SK-N-SH (cell line): ENCODE measurements at regions of chr2 and their contacts with region 1.

Region 1: GRCh38 chr2:11688222-11689069 is 18.5 kb upstream of the NTSR2 start:
- DNase-seq: peak; percentile 94
- H3K4me3 ChIP-seq: peak overlapping the region; percentile 27 to 48
- H3K27ac ChIP-seq: no peak overlapping the region
- H3K4me1 ChIP-seq: peaks cover 0 to 12% of the 10 kb centered on the region in 2 experiments; a peak in 2 of 4 replicates
- H3K27me3 ChIP-seq: peaks cover 6% of the 10 kb centered on the region; the same call in 1 of the 2 replicates
- CTCF ChIP-seq: peak; percentile 99
- EP300 ChIP-seq: no peak
- RAD21 ChIP-seq: peak; percentile 92

Region 2: DNA sequence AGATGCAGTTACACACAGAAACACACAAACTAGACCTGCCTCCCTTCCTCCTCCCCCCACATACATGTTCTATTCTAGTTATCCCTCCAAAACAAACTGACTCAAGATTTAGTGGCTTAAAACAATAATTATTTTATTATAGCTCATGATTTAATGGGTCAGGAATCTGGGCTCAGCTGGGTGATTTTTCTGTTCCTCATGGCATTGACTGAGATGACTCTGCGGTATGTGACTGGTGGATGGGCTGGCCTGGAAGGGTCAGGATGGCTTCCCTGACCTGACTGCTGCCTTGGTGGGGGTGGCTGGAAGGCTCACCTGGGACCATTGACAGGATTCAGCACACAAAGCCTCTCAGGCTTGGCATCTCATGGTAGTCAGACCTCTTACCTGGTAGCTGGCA is 15.3 kb after region 1 on chr2:
- CTCF ChIA-PET with region 1: interaction called, 157 read pairs
- POLR2A ChIA-PET with region 1: no interaction called
- DNase-seq: no peak
- H3K4me3 ChIP-seq: no peak overlapping the region
- H3K27ac ChIP-seq: no peak overlapping the region
- H3K4me1 ChIP-seq: peaks cover 7 to 15% of the 10 kb centered on the region in 2 experiments; a peak in 2 of 4 replicates
- H3K27me3 ChIP-seq: no peaks in the 10 kb centered on the region
- CTCF ChIP-seq: no peak
- EP300 ChIP-seq: no peak
- RAD21 ChIP-seq: no peak

Region 3: GRCh38 chr2:11716689-11717321 is 28.4 kb after region 1 on chr2:
- CTCF ChIA-PET with region 1: interaction called, 130 read pairs
- POLR2A ChIA-PET with region 1: interaction called, 6 read pairs
- DNase-seq: no peak
- H3K4me3 ChIP-seq: no peak overlapping the region
- H3K27ac ChIP-seq: no peak overlapping the region
- H3K4me1 ChIP-seq: peaks cover 0 to 51% of the 10 kb centered on the region in 2 experiments; a peak in 2 of 4 replicates
- H3K27me3 ChIP-seq: peaks cover 23% of the 10 kb centered on the region; the same call in 1 of the 2 replicates
- CTCF ChIP-seq: no peak
- EP300 ChIP-seq: no peak
- RAD21 ChIP-seq: no peak

Region 4: DNA sequence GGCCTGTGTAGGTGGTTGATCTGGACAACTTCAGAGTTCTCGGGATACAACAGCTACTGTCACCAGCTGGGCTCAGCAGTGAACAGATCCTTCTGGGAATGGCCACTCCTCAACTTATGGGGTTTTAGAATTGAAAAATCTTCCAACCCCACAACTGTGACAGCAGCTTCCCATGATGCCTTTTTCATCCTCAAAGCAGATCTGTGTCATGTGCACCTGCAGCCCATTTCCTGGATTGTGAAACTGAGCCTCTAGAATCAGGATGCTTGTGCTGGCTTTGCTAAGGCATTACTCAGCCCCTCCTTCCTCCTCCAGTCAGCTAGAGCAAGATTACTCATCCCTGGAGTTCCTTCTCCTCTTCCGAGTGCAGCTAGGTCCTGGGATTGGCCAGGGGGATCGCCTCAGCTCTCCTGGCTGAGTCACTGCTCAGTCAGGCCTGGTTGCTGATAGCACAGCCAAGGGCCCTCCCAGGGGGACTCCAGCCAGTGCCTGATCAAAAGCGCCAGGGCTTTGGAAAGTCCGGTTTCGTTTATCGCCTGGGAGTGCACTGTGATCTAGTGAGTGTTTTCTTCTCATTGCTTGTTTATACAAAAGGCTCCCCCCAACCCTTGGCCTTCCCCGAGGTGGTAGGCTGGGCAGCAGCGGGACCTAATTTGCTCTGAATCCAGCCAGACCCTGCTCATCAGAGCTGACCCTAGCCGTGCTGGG is 55.6 kb after region 1 on chr2:
- CTCF ChIA-PET with region 1: interaction called, 873 read pairs
- POLR2A ChIA-PET with region 1: interaction called, 12 read pairs
- DNase-seq: peak; percentile 94
- H3K4me3 ChIP-seq: peak overlapping the region; percentile 30 to 54
- H3K27ac ChIP-seq: peak overlapping the region; percentile 60 to 81
- H3K4me1 ChIP-seq: peaks cover 22 to 47% of the 10 kb centered on the region in 2 experiments
- H3K27me3 ChIP-seq: no peaks in the 10 kb centered on the region
- CTCF ChIP-seq: no peak
- EP300 ChIP-seq: peak; percentile 72 to 74; a peak in 2 of 4 replicates
- RAD21 ChIP-seq: peak; percentile 46

Region 5: GRCh38 chr2:11771971-11772615 is 83.6 kb after region 1 on chr2:
- CTCF ChIA-PET with region 1: interaction called, 886 read pairs
- POLR2A ChIA-PET with region 1: no interaction called
- DNase-seq: no peak
- H3K4me3 ChIP-seq: no peak overlapping the region
- H3K27ac ChIP-seq: no peak overlapping the region
- H3K4me1 ChIP-seq: peaks cover 6 to 24% of the 10 kb centered on the region in 2 experiments; a peak in 2 of 4 replicates
- H3K27me3 ChIP-seq: no peaks in the 10 kb centered on the region
- CTCF ChIP-seq: no peak
- EP300 ChIP-seq: no peak
- RAD21 ChIP-seq: no peak